ENCODE measurements at regions of chr13 and their contacts with region 1.

Region 1: DNA sequence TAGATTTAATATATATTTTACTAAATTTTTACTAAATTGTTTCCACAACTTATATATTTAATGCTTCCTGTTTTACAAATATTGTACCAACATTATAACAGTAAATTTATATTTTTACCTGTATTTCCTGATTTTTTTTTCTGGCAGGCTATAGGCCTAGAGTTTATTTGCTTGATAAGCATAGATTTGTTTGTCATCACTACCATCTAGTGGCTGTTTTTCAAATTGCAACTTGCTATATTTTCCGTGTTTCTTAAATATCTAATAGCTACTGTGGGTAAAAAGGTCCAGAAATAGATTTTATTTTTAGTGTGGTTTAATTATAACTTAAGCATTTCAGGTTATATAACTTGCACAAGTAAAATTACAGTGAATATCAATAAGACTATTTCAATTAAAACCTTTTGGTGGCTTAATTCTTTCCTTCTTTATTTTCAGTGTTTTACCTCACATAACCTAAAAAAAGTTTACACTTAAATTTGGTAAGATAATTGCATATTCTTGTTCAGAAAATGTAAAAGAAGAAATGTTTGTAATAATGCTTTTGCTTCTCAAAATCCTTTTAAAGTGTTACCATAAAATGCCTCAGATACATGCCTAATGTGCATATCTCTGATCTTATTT is 60.6 kb downstream of the NDFIP2 start:
- DNase-seq: peak in 3 of 42 donors; percentile 25 to 66 (median 30)

Region 2: DNA sequence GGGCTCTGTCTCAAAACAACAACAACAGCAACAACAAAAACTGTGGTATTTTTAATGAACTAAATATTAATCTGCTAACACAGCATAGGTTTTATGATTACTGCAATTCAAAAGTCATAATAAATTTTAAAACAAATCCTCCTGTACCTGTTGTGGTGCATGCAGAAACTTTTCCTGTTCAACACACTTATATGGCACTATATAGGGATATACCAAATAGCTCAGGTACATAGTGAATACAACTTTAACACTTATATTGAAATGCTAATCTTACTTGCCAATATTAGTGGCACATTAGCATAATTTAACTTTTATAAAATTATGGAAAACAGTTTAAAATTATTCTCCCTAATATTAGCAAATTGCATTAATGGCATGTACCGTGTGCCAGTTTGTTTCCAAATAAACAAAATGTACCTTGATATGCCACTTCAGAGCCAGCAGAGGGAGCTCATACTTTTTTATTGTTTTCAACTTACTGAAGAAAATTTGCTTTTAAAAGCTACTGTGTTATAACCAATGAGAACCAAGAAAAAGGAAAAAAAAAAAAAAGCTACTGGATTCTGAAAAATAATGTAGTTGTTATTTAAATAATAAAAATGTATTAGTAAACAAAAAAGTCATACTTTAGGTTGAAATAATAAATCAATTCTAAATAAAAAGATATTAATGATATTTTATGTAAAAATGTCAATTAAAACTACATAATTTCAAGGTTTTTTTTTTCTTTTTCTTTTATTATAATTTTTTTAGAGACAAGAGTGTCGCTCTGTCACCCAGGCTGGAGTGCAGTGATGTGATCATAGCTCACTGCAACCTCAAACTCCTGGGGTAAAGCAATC is 117.5 kb before region 1 on chr13:
- intact Hi-C with region 1: loop called (anchors 5 kb)
- DNase-seq: peak in 3 of 42 donors; percentile 24 to 55 (median 35)

Measured in head of caudate nucleus (tissue), 42 donors.